Activated CD4-positive, alpha-beta T cell treated with anti-CD3 and anti-CD28 coated beads for 36 hours (primary cell): ENCODE measurements at regions of chr17 and their contacts with region 1.

Region 1: DNA sequence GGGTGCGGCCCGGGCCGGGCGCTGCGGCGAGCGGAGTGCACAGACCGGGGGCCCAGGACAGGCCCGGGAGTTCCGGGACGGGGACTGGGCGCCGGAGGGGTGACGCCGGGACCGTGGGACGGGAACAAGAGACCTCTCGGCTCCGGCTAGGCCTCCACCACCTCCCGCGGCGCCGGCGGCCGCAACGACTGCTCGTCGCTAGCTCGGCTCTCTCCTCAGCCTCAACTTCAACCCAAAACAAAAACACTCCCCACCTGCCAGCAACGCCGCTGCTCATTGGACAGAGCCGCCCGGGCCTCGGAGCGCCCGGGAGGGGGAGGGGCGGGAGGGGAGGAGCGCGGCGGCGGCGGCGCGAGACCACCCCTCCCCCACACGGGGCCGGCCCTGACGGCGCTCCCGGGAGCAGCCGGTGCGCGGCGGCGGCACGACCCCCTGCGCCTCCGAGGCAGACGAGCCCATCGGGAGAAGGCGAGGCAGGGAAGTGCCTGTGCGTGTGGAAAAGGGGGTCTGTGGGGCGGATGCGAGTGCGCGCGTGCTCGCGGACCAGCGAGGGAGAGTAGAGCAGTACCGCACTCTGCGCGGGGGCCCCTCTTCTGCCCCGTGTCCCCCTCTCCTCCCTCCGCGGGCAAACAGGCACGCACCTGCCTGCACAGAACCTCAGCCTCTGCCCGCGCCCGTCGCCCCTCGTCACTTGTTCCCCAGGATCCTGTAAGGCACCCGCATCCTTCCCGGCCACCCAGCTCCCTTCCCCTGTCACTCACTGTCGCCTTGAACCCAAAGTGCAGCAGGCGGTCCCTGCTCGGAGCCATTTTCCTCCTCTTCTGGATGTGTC is at the start of gene FBXL20:
- DNase-seq: peak; percentile 97
- ATAC-seq: peak; percentile 63
- H3K4me3 Mint-ChIP-seq: peak within 1 kb of the TSS; percentile 91
- H3K27ac Mint-ChIP-seq: peak within 1 kb of the TSS; percentile 92
- H3K4me1 Mint-ChIP-seq: peaks cover 48% of the 10 kb centered on the region
- H3K27me3 Mint-ChIP-seq: no peaks in the 10 kb centered on the region
- total RNA-seq, gene FBXL20: 16.9 to 18.9 TPM

Region 2: GRCh38 chr17:38853292-38854219 is 548.1 kb before region 1 on chr17 and contains the start of gene RPL23:
- CTCF ChIA-PET with region 1: no interaction called
- POLR2A ChIA-PET with region 1: no interaction called
- intact Hi-C with region 1: loop called in 1 of 2 experiments (anchors 5 kb)
- DNase-seq: peak; percentile 96
- ATAC-seq: peak; percentile 87
- H3K4me3 Mint-ChIP-seq: peak within 1 kb of the TSS; percentile 99
- H3K27ac Mint-ChIP-seq: peak within 1 kb of the TSS; percentile 99
- H3K4me1 Mint-ChIP-seq: peaks cover 46% of the 10 kb centered on the region
- H3K27me3 Mint-ChIP-seq: no peaks in the 10 kb centered on the region
- total RNA-seq, gene RPL23: 1,886 to 1,896 TPM

Region 3: DNA sequence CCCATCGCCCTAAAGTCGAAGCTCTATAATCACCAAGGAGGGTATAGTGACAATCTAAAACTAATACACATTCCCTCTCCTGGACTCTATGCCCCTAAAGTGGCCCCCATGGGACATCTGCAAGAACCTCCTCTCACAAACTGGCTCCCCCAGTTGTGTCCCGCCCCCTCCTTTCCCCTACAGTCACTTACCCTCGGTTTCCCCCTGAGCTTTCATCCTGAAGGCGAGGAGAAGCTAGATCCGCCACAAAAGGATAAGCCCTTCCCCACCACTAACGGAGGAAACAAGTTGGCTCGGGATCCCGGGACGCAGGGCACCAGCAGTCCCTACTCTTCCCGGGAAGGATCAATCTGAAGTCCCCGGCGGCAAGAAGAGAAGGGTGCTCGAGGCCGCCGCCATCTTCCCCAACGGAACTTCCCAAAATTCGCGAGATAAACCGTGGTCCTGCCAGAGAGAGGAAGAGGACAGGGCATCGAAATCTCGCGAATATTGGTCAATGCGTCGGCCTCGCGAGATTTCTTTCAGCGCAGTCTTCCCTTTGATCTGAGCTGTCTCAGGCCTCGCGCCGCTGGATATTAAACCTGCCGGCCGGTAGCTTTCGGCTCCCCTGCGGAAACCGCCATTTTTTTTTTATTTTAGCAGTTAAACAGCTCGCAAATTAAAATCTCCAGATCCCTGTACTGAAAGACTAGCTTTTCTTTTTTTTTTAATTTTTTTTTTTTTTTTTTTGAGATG is 49.4 kb after region 1 on chr17 and contains the start of gene MED1:
- CTCF ChIA-PET with region 1: interaction called, 3 read pairs
- POLR2A ChIA-PET with region 1: interaction called, 5 read pairs
- intact Hi-C with region 1: loop called in 1 of 2 experiments (anchors 1 kb)
- DNase-seq: peak; percentile 96
- ATAC-seq: peak; percentile 99
- H3K4me3 Mint-ChIP-seq: peak within 1 kb of the TSS; percentile 96
- H3K27ac Mint-ChIP-seq: peak within 1 kb of the TSS; percentile 96
- H3K4me1 Mint-ChIP-seq: peaks cover 30% of the 10 kb centered on the region
- H3K27me3 Mint-ChIP-seq: no peaks in the 10 kb centered on the region
- total RNA-seq, gene MED1: 66.1 to 76.1 TPM

Region 4: DNA sequence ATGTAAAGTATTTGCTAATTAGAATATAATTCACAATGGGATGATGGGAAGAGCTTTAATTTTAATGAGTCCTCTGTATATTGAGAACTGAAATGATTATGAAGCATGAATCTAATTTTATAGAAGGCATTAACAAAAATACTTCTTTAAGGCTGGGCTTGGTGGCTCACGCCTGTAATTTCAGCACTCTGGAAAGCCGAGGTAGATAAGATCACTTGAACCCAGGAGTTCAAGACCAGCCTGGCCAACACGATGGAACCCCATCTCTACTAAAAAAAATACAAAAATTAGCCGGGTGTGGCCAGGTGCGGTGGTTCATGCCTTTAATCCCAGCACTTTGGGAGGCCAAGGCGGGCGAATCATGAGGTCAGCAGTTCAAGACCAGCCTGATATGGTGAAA is 71.7 kb after region 1 on chr17:
- CTCF ChIA-PET with region 1: no interaction called
- POLR2A ChIA-PET with region 1: no interaction called
- intact Hi-C with region 1: no loop called
- DNase-seq: no peak
- ATAC-seq: no peak
- H3K4me3 Mint-ChIP-seq: no peak overlapping the region
- H3K27ac Mint-ChIP-seq: no peak overlapping the region
- H3K4me1 Mint-ChIP-seq: peaks cover 3% of the 10 kb centered on the region
- H3K27me3 Mint-ChIP-seq: no peaks in the 10 kb centered on the region

Region 5: DNA sequence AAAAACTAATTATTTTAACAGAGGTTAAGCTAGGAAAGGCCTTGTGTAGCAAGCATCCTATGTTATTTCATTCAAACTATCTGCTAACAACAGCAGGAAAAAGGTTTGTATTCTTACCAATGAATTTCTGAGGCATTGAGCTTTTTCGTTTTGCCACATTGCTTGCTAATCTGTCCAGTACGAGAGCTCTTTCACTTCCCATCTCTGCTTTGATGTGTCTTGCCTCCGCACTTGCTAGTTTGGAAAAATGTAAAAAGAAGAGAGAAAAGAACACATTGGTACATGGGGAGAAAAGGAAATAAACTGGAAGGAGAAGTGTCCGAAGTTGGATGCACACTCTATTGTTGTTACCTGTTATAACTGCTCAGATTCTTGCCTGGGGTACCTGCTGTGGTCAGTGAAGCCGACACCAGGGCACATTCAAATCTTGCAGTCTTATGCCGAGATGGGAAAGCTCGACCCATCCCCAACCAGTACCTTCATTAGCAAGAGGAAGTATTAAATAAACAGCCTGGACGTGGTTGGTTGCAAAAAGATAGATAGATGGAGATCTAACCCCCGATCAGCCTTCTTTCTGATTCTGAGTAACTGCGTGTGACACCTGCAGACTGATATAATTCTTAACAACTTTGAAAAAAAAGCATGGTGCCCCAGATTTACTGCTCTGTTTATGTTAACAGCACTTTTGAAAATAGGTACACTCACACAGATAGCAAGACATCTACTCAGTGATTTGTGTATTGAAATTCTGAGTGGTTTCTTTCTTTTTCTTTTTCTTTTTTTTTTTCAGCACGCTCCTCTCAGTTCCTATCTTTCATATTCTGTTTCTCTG is 376.1 kb after region 1 on chr17:
- CTCF ChIA-PET with region 1: no interaction called
- POLR2A ChIA-PET with region 1: no interaction called
- intact Hi-C with region 1: loop called in 1 of 2 experiments (anchors 5 kb)
- DNase-seq: no peak
- ATAC-seq: peak; percentile 76
- H3K4me3 Mint-ChIP-seq: peak overlapping the region; percentile 72
- H3K27ac Mint-ChIP-seq: peak overlapping the region; percentile 95
- H3K4me1 Mint-ChIP-seq: peaks cover 87% of the 10 kb centered on the region
- H3K27me3 Mint-ChIP-seq: no peaks in the 10 kb centered on the region

Region 6: GRCh38 chr17:40542558-40543411 is 1141.2 kb after region 1 on chr17:
- CTCF ChIA-PET with region 1: no interaction called
- POLR2A ChIA-PET with region 1: no interaction called
- intact Hi-C with region 1: loop called in 1 of 2 experiments (anchors 5 kb)
- DNase-seq: peak; percentile 76
- ATAC-seq: peak; percentile 52
- H3K4me3 Mint-ChIP-seq: peak overlapping the region; percentile 63
- H3K27ac Mint-ChIP-seq: peak overlapping the region; percentile 98
- H3K4me1 Mint-ChIP-seq: peaks cover 88% of the 10 kb centered on the region
- H3K27me3 Mint-ChIP-seq: no peaks in the 10 kb centered on the region